Naive thymus-derived CD8-positive, alpha-beta T cell (primary cell): ENCODE measurements at regions of chr2 and their contacts with region 1.

Region 1: GRCh38 chr2:197357991-197358390 is 47.4 kb upstream of the ANKRD44 start:
- DNase-seq: no peak
- ATAC-seq: no peak
- H3K4me3 Mint-ChIP-seq: no peak overlapping the region
- H3K27ac Mint-ChIP-seq: peak overlapping the region in 1 of 10 donors; percentile 4
- H3K4me1 Mint-ChIP-seq: peaks cover 14 to 28% (median 19%) of the 10 kb centered on the region in 4 donors
- H3K27me3 Mint-ChIP-seq: no peaks in the 10 kb centered on the region

Region 2: GRCh38 chr2:197286805-197287598 is 71.0 kb before region 1 on chr2:
- POLR2A ChIA-PET with region 1: no interaction called
- DNase-seq: peak in 8 of 10 donors; percentile 53 to 79 (median 62)
- ATAC-seq: peak; percentile 88 to 96
- H3K4me3 Mint-ChIP-seq: peak overlapping the region; percentile 47 to 88 (median 82)
- H3K27ac Mint-ChIP-seq: peak overlapping the region; percentile 91 to 99 (median 96)
- H3K4me1 Mint-ChIP-seq: peaks cover 39 to 92% (median 86%) of the 10 kb centered on the region in 4 donors
- H3K27me3 Mint-ChIP-seq: no peaks in the 10 kb centered on the region

Region 3: GRCh38 chr2:197322724-197323720 is 35.0 kb before region 1 on chr2:
- POLR2A ChIA-PET with region 1: interaction called, 10 read pairs
- DNase-seq: peak in 3 of 10 donors; percentile 23 to 57 (median 43)
- ATAC-seq: peak; percentile 75 to 82
- H3K4me3 Mint-ChIP-seq: peak overlapping the region; percentile 59 to 88 (median 82)
- H3K27ac Mint-ChIP-seq: peak overlapping the region; percentile 94 to 100 (median 98)
- H3K4me1 Mint-ChIP-seq: peaks cover 37 to 74% (median 68%) of the 10 kb centered on the region in 4 donors
- H3K27me3 Mint-ChIP-seq: no peaks in the 10 kb centered on the region